ENCODE measurements at regions of chr3 and their contacts with region 1.

Region 1: DNA sequence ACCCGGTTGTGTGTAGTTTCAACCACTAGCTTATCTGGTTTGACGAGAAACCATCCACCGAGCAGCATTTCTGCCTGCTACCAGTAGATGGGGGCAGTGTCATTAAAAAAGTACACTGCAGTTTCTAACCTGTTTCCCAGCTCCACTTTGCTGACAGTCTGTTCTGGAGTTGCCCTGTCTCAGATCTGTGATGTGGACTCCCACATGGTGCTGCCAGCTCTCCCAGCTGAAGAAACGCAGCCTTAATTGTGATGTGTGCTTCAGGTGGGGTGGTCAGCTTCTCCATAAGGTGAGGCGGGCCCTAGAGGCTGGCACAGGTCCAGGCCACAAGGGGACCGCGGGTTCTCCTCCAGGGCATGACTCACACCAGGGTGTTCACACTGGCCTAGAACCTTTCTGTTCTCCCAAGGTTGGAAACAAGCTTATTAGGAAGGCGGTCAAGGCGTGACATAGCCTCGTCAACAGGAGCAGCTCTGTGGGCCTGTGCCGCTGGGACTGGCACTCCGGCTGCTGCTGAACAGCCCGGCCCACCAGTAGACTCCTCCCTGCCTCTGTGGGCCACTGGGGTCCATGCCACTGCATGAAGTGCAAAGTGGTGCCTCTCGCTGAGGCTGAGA is 2.9 kb upstream of the FAM43A start:
- DNase-seq: peak; percentile 71
- H3K4me3 Mint-ChIP-seq: no peak overlapping the region
- H3K27ac Mint-ChIP-seq: no peak overlapping the region
- H3K4me1 Mint-ChIP-seq: peaks cover 45% of the 10 kb centered on the region
- H3K27me3 Mint-ChIP-seq: peaks cover 38% of the 10 kb centered on the region

Region 2: GRCh38 chr3:195106418-195106906 is 423.7 kb after region 1 on chr3:
- CTCF ChIA-PET with region 1: interaction called, 47 read pairs
- POLR2A ChIA-PET with region 1: no interaction called
- DNase-seq: peak; percentile 62
- H3K4me3 Mint-ChIP-seq: no peak overlapping the region
- H3K27ac Mint-ChIP-seq: no peak overlapping the region
- H3K4me1 Mint-ChIP-seq: peaks cover 10% of the 10 kb centered on the region
- H3K27me3 Mint-ChIP-seq: no peaks in the 10 kb centered on the region